Activated naive CD4-positive, alpha-beta T cell treated with anti-CD3 and anti-CD28 coated beads for 36 hours (primary cell): ENCODE measurements at regions of chr6 and their contacts with region 1.

Region 1: DNA sequence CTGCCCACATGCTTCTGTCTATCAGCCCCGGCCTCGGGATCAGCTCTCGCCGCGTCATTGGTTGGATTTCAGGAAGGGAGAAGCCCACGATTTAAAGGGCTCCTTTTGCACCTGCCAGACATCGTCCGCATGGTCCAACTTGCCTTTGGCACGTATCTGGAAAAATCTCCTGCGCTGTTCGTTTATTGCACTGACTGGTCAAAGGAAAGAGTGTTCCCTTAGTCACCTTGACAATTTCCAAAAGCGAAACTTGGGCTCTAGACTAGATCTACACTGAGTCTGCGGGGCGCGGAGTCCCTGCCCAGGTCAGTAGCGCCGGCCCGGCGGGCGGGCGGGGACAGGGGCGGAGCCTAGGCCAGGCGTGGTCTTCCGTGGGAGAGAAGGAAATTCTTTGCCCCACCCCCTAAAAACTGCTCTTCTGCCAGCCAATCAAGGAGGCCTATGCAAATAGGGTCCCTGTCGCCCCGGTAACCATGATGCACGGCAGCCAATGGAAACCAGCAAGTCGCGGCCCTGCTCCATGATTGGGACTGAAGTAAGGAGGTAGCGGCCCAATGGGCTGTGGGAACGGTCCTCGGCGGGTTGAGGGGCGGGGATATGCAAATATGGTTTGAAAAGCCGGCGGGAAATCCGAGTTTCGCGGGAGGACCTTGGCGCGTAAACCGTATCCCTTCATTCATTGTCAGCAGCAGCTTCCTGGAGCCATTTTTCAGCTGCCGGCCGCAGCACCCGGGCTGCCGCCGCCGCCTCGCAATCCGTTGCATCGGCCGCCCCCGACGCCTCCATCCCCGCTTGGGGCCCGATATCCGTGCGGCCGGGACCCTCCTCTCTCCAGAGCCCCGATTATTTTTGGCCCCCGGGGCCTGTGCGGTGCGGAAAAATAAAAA is at the start of gene E2F3:
- DNase-seq: peak; percentile 100
- H3K4me3 Mint-ChIP-seq: peak within 1 kb of the TSS; percentile 95
- H3K27ac Mint-ChIP-seq: peak within 1 kb of the TSS; percentile 99
- H3K4me1 Mint-ChIP-seq: peaks cover 18% of the 10 kb centered on the region
- H3K27me3 Mint-ChIP-seq: no peaks in the 10 kb centered on the region
- total RNA-seq, gene E2F3: 12.7 to 13.1 TPM

Region 2: DNA sequence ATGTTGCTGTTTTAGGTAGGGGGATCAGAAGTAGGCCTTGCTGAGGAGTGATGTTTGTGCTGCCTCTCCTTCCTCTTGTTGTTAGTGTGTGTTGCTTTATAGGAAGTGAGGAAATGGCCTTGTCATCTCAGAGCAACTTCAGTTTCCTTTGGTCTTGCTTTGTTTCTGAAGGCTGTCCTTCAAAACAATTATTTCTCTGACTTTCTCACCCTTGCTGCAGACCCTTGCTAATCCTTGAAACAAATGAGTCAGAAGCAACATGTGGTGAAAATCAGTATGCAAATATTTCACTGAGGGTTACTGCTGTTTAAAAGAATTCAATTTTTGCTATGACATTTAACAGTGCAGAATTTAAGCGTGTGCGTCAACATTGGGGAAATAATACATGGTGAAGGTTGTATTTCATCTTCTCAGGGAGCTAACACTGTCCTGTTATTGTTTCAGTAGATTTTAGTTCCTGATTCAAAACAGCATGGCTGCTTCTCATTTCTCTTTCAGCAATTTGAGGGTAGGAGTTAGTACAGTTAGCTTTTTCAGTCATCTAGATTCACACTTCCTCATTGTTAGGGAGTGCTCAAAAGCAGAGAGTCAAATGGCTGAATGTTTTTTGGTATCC is 2000.5 kb before region 1 on chr6:
- CTCF ChIA-PET with region 1: no interaction called
- intact Hi-C with region 1: loop called (anchors 10 kb)
- DNase-seq: no peak
- H3K4me3 Mint-ChIP-seq: no peak overlapping the region
- H3K27ac Mint-ChIP-seq: peak overlapping the region; percentile 59
- H3K4me1 Mint-ChIP-seq: peaks cover 15% of the 10 kb centered on the region
- H3K27me3 Mint-ChIP-seq: no peaks in the 10 kb centered on the region

Region 3: DNA sequence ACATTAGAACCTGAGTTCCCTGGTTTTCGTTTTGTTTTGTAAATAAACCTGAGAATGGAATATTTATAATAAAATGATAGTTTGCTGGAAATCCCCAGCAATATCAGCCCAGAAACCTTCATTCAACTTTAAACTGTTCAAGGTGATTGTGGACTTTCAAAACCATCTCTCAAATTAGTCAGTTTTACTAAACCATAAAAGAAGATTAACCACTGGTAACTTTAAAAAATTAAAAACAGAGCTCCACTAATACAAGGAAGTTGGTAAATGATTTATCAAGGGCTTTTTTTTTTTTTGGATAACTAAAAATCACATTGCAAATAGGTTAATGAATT is 199.2 kb before region 1 on chr6:
- CTCF ChIA-PET with region 1: no interaction called
- intact Hi-C with region 1: loop called (anchors 2 kb)
- DNase-seq: no peak
- H3K4me3 Mint-ChIP-seq: no peak overlapping the region
- H3K27ac Mint-ChIP-seq: no peak overlapping the region
- H3K4me1 Mint-ChIP-seq: peaks cover 36% of the 10 kb centered on the region
- H3K27me3 Mint-ChIP-seq: no peaks in the 10 kb centered on the region

Region 4: DNA sequence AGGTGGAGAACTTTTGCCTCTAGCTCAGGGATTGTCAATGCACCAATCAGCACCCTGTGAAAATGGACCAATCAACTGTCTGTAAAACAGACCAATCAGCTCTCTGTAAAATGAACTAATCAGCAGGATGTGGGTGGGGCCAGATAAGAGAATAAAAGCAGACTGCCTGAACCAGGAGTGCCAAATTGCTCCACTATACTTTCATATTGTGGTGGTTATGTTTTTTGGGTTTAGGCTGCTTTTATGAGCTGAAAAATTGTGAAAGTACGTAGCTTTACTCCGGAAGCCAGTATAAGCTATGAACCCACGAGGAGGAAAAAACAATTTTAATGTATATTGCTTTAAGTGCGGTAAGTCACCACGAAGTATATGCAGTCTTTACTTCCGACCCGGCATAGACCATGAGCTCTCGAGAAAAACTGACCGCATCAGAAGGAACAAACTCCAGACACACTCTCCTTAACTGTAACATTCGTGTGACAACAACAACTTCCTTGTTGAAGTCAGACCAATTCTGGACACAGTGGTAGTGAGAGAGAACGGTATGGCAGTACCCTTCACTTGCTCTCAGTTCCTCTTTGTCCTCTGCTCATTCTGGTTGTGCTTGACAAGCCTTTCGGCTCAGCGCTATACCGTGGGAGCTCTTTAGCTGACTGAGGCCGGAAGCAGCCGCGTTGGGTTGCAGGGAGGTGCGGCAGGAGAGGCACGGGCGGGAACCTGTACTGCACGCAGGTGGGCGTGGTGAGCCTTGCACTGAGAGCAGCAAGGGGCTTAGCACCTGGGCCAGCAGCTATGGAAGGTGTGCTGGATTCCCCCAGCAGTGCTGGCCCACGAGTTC is 81.7 kb before region 1 on chr6:
- CTCF ChIA-PET with region 1: interaction called, 5 read pairs
- intact Hi-C with region 1: loop called (anchors 1 kb)
- DNase-seq: peak; percentile 83
- H3K4me3 Mint-ChIP-seq: peak overlapping the region; percentile 81
- H3K27ac Mint-ChIP-seq: peak overlapping the region; percentile 96
- H3K4me1 Mint-ChIP-seq: peaks cover 14% of the 10 kb centered on the region
- H3K27me3 Mint-ChIP-seq: no peaks in the 10 kb centered on the region

Region 5: DNA sequence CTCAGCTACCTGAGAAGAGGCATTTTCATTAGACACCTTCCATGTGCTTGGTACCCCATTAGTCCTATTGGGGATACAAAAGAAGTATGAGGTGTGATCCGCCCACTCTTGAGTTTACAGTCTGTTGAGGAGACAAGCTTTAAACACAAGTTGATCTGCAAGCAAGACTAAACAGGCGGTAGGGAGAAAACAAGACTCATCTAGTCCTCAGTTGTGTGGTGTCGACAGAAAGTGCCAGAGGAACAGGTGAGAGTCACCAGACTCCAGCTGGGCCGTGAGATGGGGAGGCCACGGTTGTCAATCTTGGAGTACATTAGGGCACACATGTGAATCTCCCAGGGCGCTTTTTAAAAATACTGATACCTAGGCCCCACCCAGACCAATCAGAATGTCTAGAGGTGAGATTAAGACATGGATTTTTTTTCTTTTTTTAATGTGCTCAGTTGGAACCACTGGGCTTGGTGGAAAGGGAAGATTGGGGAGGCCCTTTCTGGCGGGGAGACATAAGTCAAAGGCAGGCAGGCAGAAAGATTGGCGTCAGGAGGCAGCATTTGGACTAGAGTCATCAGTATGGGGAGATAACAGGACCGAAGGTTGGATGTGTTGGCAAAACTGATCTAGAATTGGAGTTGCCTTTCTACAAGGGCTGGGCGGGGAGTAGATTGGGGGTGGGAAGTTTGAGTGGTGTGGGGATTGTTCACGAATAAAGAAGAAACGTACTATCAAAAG is 10.7 kb after region 1 on chr6:
- CTCF ChIA-PET with region 1: interaction called, 11 read pairs
- intact Hi-C with region 1: loop called (anchors 1 kb)
- DNase-seq: no peak
- H3K4me3 Mint-ChIP-seq: no peak overlapping the region
- H3K27ac Mint-ChIP-seq: no peak overlapping the region
- H3K4me1 Mint-ChIP-seq: peaks cover 70% of the 10 kb centered on the region
- H3K27me3 Mint-ChIP-seq: no peaks in the 10 kb centered on the region

Region 6: GRCh38 chr6:20542927-20543602 is 141.6 kb after region 1 on chr6:
- CTCF ChIA-PET with region 1: interaction called, 6 read pairs
- intact Hi-C with region 1: loop called (anchors 1 kb)
- DNase-seq: peak; percentile 63
- H3K4me3 Mint-ChIP-seq: no peak overlapping the region
- H3K27ac Mint-ChIP-seq: peak overlapping the region; percentile 60
- H3K4me1 Mint-ChIP-seq: peaks cover 50% of the 10 kb centered on the region
- H3K27me3 Mint-ChIP-seq: no peaks in the 10 kb centered on the region

Region 7: DNA sequence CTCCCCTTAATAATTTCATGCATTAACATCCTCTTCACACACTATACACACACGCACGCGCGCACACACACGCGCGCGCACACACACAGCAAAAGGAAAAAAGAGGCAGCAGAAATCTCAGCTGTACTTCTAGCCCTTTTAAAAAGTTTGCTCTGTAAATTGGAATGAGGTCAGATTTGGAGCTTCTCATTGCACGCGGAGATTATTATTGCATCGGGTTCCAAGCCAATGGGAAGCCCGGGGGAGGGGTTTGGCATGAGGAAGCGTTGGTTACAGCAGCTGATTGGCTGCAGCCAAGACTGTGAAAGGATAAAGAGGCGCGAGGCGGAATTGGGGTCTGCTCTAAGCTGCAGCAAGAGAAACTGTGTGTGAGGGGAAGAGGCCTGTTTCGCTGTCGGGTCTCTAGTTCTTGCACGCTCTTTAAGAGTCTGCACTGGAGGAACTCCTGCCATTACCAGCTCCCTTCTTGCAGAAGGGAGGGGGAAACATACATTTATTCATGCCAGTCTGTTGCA is 1192.0 kb after region 1 on chr6 and contains the start of gene SOX4:
- CTCF ChIA-PET with region 1: no interaction called
- intact Hi-C with region 1: loop called (anchors 5 kb)
- DNase-seq: peak; percentile 68
- H3K4me3 Mint-ChIP-seq: no peak within 1 kb of the TSS
- H3K27ac Mint-ChIP-seq: no peak within 1 kb of the TSS
- H3K4me1 Mint-ChIP-seq: peaks cover 22% of the 10 kb centered on the region
- H3K27me3 Mint-ChIP-seq: peaks cover 50% of the 10 kb centered on the region
- total RNA-seq, gene SOX4: 0.69 to 0.72 TPM